ENCODE measurements at regions of chr1 and their contacts with region 1.

Region 1: GRCh38 chr1:115679141-115679611 is 37.4 kb downstream of the VANGL1 start:
- DNase-seq: peak; percentile 30
- H3K4me3 ChIP-seq: no peak overlapping the region
- H3K27ac ChIP-seq: peak overlapping the region; percentile 33
- H3K27me3 ChIP-seq: no peaks in the 10 kb centered on the region
- CTCF ChIP-seq: no peak

Region 2: DNA sequence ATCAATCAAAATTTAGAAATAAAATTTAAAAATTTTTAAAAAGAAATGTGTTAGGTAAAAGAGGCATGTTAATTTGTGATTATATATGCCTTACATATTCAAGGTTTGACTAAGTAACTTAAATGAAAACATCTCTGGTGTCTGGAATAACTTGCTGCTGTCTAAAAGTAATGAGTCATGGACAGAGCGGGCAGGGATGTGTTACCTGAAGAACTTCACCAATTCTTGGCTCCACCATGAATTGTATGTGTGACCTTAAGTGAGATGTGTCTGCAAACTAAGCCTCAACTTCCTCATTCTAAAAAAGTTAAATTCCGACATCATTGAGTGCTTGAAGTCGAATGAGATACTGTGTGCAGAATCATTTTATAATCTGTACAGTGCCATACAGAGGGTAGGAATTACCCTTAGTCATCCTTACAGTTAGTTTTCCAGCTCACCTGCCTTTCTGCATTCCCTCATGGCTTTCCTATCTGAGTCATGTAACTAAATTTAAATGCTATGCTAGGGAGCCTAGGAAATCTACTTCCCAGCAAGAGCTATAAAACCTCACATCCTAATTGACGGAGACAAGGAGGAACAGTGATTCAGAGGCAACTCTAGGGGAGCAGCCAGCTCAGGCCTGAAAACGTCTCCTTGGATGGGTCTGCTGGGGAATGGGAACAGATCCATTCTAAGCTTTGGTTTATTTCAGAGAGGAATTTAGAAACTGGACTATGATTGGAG is 489.2 kb before region 1 on chr1:
- CTCF ChIA-PET with region 1: no interaction called
- POLR2A ChIA-PET with region 1: no interaction called
- DNase-seq: peak; percentile 64
- H3K4me3 ChIP-seq: no peak overlapping the region
- H3K27ac ChIP-seq: peak overlapping the region; percentile 55
- H3K27me3 ChIP-seq: no peaks in the 10 kb centered on the region
- CTCF ChIP-seq: no peak

Region 3: GRCh38 chr1:115669002-115669673 is 10.0 kb before region 1 on chr1:
- CTCF ChIA-PET with region 1: no interaction called
- POLR2A ChIA-PET with region 1: interaction called, 14 read pairs
- DNase-seq: peak; percentile 73
- H3K4me3 ChIP-seq: no peak overlapping the region
- H3K27ac ChIP-seq: peak overlapping the region; percentile 73
- H3K27me3 ChIP-seq: no peaks in the 10 kb centered on the region
- CTCF ChIP-seq: no peak

Measured in AG04450 (cell line).